HCT116 (cell line): ENCODE measurements at regions of chr5 and their contacts with region 1.

Region 1: GRCh38 chr5:142324871-142325724 is at the start of gene SPRY4:
- DNase-seq: peak; percentile 95
- ATAC-seq: peak; percentile 51
- H3K4me3 ChIP-seq: peak within 1 kb of the TSS; percentile 78 to 98
- H3K27ac ChIP-seq: peak within 1 kb of the TSS; percentile 98
- H3K4me1 ChIP-seq: peaks cover 61 to 72% of the 10 kb centered on the region in 2 experiments
- H3K27me3 ChIP-seq: no peaks in the 10 kb centered on the region
- CTCF ChIP-seq: 0 out of 6 replicates have a peak, but pooled peaks of 1 of the 3 experiments have one; percentile 5
- POLR2A ChIP-seq: peak; percentile 98
- RAD21 ChIP-seq: no peak
- total RNA-seq, gene SPRY4: 112 TPM

Region 2: DNA sequence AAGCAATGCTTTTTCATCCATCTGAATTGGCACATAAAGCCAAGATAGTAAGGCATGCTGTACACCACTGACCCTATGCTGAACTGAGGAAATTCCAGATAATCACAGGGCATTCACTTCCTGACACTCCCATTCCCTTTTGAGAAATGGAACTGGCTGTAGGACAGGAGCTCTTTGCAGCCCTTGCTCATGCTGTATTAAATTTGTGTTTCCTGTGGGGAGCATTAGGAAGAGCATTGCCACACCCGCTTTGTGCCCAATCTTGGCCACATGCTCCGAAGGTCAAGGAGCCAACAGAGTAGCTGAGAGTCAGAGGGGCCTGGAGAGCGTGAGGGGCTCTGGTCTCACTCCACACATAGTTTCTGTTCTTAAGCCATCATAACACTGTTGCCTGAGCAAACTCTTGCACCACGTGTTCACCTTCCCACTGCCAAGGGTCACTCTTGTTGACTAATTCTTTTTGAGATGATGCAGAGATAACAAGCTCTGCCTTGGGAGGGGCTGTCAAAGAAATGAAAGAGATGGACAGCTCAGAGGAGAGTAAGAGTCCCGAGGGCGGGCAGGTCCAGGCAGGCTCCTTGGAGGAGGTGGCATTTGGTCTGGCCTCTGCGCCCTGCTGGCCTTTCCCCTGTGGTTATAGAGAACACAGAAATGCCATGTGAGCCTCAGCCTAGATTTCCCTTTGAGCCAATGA is 611.3 kb before region 1 on chr5:
- CTCF ChIA-PET with region 1: no interaction called
- POLR2A ChIA-PET with region 1: no interaction called
- RAD21 ChIA-PET with region 1: no interaction called
- intact Hi-C with region 1: no loop called
- DNase-seq: no peak
- ATAC-seq: peak; percentile 65
- H3K4me3 ChIP-seq: 0 out of 4 replicates have a peak overlapping the region, but pooled peaks of 1 of the 2 experiments have one; percentile 2
- H3K27ac ChIP-seq: no peak overlapping the region
- H3K4me1 ChIP-seq: peaks cover 22 to 38% of the 10 kb centered on the region in 2 experiments
- H3K27me3 ChIP-seq: no peaks in the 10 kb centered on the region
- CTCF ChIP-seq: no peak
- POLR2A ChIP-seq: no peak
- RAD21 ChIP-seq: no peak

Region 3: GRCh38 chr5:142339781-142340180 is 14.7 kb after region 1 on chr5:
- CTCF ChIA-PET with region 1: no interaction called
- POLR2A ChIA-PET with region 1: interaction called, 11 read pairs
- RAD21 ChIA-PET with region 1: no interaction called
- intact Hi-C with region 1: no loop called
- DNase-seq: no peak
- ATAC-seq: no peak
- H3K4me3 ChIP-seq: no peak overlapping the region
- H3K27ac ChIP-seq: no peak overlapping the region
- H3K4me1 ChIP-seq: peaks cover 4 to 46% of the 10 kb centered on the region in 2 experiments; a peak in 3 of 4 replicates
- H3K27me3 ChIP-seq: no peaks in the 10 kb centered on the region
- CTCF ChIP-seq: no peak
- POLR2A ChIP-seq: no peak
- RAD21 ChIP-seq: no peak

Region 4: DNA sequence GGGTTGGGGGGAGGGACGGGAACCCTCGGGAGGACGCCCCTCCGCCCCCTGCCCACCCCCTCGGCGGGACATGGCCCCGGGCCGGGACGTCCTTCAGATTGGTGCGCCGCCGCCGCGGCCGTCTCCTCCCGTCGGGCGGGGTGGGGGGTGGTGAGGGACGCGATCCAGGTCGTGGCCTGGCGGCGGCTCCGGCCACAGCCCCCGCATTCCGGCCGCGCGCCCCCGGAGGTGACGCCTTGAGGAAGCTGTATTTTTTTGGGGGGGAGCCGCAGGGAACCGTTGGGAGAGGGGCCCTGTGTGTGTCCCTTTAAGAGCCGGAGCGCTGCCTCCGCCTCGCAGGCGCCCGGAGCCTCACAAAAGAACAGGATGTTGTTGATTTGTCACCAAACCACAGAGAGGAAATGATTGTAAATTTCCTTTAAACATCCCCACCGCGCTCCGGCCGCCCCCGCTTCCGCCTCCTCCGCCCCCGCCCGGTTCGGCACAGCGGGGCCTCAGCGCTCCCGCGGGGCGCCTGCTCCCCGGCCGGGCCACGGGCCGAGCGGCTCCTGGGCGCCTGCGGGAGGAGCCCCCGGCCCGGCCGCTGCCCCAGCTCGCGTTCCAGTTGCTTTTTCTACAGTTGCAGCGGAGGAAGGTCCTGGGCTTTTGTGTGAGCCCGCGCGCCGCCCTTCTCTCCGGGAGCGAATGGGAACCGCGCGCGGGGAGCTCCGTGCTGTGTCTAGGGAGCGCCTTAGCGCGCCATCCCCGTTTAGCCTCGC is 31.8 kb after region 1 on chr5:
- CTCF ChIA-PET with region 1: interaction called, 4 read pairs
- POLR2A ChIA-PET with region 1: interaction called, 199 read pairs
- RAD21 ChIA-PET with region 1: interaction called in 1 of 2 experiments, 3 read pairs
- intact Hi-C with region 1: loop called (anchors 1 kb)
- DNase-seq: peak; percentile 87
- ATAC-seq: peak; percentile 67
- H3K4me3 ChIP-seq: peak overlapping the region; percentile 43 to 59
- H3K27ac ChIP-seq: peak overlapping the region; percentile 99
- H3K4me1 ChIP-seq: peaks cover 72 to 86% of the 10 kb centered on the region in 2 experiments
- H3K27me3 ChIP-seq: no peaks in the 10 kb centered on the region
- CTCF ChIP-seq: no peak
- POLR2A ChIP-seq: no peak
- RAD21 ChIP-seq: no peak

Region 5: GRCh38 chr5:143119291-143119769 is 794.2 kb after region 1 on chr5:
- CTCF ChIA-PET with region 1: no interaction called
- POLR2A ChIA-PET with region 1: no interaction called
- RAD21 ChIA-PET with region 1: no interaction called
- intact Hi-C with region 1: no loop called
- DNase-seq: no peak
- ATAC-seq: no peak
- H3K4me3 ChIP-seq: no peak overlapping the region
- H3K27ac ChIP-seq: no peak overlapping the region
- H3K4me1 ChIP-seq: peaks cover 0 to 12% of the 10 kb centered on the region in 2 experiments; a peak in 2 of 4 replicates
- H3K27me3 ChIP-seq: no peaks in the 10 kb centered on the region
- CTCF ChIP-seq: no peak
- POLR2A ChIP-seq: no peak
- RAD21 ChIP-seq: no peak